Endothelial cell of umbilical vein (primary cell): ENCODE measurements at regions of chr17 and their contacts with region 1.

Region 1: DNA sequence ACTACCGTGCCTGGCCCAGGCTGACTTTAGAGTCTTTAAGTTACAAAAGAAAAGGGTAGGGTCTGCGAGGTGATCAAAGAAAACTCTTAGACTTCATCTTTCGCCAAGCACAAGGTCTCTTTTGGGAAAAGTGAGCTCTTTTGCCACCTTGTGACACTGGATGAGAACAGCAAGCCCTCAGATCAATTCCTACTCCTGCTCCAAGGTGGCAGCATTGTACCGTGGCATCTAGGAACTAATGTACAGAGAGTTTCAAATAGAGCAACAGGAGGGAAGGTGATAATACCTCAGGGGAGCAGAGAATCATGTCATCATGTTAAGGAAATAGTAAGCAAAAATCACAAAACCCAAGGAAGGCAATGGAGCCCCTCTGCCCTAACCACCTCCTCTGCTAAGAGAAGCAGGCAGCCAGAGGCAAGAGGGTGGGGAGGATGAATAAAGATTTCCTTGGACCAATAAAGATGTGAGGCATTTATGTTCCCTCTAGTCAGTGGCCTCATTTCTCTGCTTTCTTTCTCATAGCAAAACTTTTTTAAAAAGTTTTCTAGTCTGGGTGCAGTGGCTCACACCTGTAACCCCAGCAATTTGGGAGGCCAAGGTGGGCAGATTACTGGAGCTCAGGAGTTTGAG is 2.1 kb upstream of the C17orf78 start:
- DNase-seq: peak; percentile 90
- H3K4me3 ChIP-seq: no peak overlapping the region
- H3K27ac ChIP-seq: no peak overlapping the region
- H3K4me1 ChIP-seq: no peaks in the 10 kb centered on the region
- H3K27me3 ChIP-seq: no peaks in the 10 kb centered on the region
- CTCF ChIP-seq: peak; percentile 94 to 97
- POLR2A ChIP-seq: no peak

Region 2: GRCh38 chr17:36601303-36602029 is 772.2 kb before region 1 on chr17 and contains the start of gene MRM1:
- CTCF ChIA-PET with region 1: interaction called, 19 read pairs
- POLR2A ChIA-PET with region 1: interaction called, 9 read pairs
- dilution Hi-C with region 1: no loop called
- intact Hi-C with region 1: loop called (anchors 1 kb)
- DNase-seq: peak; percentile 93
- H3K4me3 ChIP-seq: peak within 1 kb of the TSS; percentile 34 to 67 (median 63)
- H3K27ac ChIP-seq: peak within 1 kb of the TSS; percentile 54
- H3K4me1 ChIP-seq: peaks cover 16% of the 10 kb centered on the region
- H3K27me3 ChIP-seq: no peaks in the 10 kb centered on the region
- CTCF ChIP-seq: peak in 1 of 2 donors; percentile 27
- POLR2A ChIP-seq: peak; percentile 98
- total RNA-seq, gene MRM1: 5.2 and 5.9 TPM in 2 replicates

Region 3: GRCh38 chr17:37273409-37274051 is 100.1 kb before region 1 on chr17:
- CTCF ChIA-PET with region 1: interaction called, 16 read pairs
- POLR2A ChIA-PET with region 1: no interaction called
- dilution Hi-C with region 1: no loop called
- intact Hi-C with region 1: no loop called
- DNase-seq: peak; percentile 62
- H3K4me3 ChIP-seq: no peak overlapping the region
- H3K27ac ChIP-seq: no peak overlapping the region
- H3K4me1 ChIP-seq: peaks cover 5% of the 10 kb centered on the region
- H3K27me3 ChIP-seq: no peaks in the 10 kb centered on the region
- CTCF ChIP-seq: no peak
- POLR2A ChIP-seq: no peak

Region 4: GRCh38 chr17:37392024-37392590 is 18.5 kb after region 1 on chr17:
- CTCF ChIA-PET with region 1: interaction called, 123 read pairs
- POLR2A ChIA-PET with region 1: no interaction called
- dilution Hi-C with region 1: no loop called
- intact Hi-C with region 1: loop called (anchors 1 kb)
- DNase-seq: no peak
- H3K4me3 ChIP-seq: no peak overlapping the region
- H3K27ac ChIP-seq: no peak overlapping the region
- H3K4me1 ChIP-seq: no peaks in the 10 kb centered on the region
- H3K27me3 ChIP-seq: no peaks in the 10 kb centered on the region
- CTCF ChIP-seq: no peak
- POLR2A ChIP-seq: no peak

Region 5: DNA sequence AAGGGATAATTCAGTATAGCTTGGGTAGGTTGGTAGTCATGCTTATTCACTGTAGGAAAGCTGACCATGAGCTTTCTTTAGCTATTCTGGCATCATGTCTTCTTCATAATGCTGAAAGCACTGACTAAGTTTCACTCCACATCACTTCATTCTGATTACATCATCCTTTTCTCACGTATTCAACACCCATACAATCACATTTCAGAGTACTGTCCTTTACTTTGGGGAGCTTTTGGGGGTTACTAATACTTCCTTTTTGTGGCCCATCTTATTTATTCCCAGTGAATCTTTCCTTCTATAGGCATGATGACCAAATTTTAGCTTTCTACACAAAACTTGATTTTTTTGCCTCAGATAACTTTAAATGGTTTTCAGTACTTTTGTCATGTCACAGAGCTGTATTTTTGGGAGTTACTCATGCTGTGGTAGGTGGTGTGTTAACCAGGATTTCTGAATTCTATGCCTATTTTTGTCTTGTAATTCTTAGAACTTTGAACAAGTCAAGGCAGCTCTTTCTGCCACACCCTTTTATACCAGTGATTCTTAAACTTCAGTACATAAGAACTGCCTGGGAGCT is 56.5 kb after region 1 on chr17:
- CTCF ChIA-PET with region 1: interaction called, 10 read pairs
- POLR2A ChIA-PET with region 1: no interaction called
- dilution Hi-C with region 1: no loop called
- intact Hi-C with region 1: no loop called
- DNase-seq: no peak
- H3K4me3 ChIP-seq: no peak overlapping the region
- H3K27ac ChIP-seq: no peak overlapping the region
- H3K4me1 ChIP-seq: no peaks in the 10 kb centered on the region
- H3K27me3 ChIP-seq: no peaks in the 10 kb centered on the region
- CTCF ChIP-seq: no peak
- POLR2A ChIP-seq: no peak

Region 6: DNA sequence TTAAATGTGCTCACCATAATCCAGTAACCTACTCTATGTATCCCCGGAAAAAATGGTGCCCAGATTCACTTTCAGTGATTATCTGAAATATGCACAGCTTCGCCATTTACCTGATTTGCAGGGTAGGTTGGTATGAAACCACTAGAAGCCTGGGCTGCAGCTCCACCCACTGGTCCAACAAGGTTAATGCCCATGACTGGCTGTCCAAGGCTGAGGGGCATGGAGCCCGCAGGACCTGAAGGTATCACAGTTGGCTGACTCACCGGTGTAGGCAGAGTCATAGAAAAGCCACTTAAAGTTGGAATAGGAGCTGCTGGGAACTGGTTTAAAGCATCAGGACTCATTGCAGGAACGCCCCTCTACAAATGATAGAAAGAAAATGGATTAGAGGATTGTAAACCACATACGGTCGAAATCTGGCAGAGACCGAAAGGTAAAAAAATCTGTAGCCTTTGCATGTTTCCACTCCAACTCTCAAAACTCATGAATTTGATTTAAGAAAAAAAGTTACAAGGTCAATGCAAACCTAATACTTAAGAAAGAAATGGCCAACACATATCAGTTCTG is 197.0 kb after region 1 on chr17:
- CTCF ChIA-PET with region 1: interaction called, 19 read pairs
- POLR2A ChIA-PET with region 1: no interaction called
- dilution Hi-C with region 1: no loop called
- intact Hi-C with region 1: no loop called
- DNase-seq: peak; percentile 66
- H3K4me3 ChIP-seq: no peak overlapping the region
- H3K27ac ChIP-seq: no peak overlapping the region
- H3K4me1 ChIP-seq: no peaks in the 10 kb centered on the region
- H3K27me3 ChIP-seq: no peaks in the 10 kb centered on the region
- CTCF ChIP-seq: peak; percentile 54 to 71
- POLR2A ChIP-seq: no peak